AG04449 (cell line): ENCODE measurements at regions of chr5 and their contacts with region 1.

Region 1: GRCh38 chr5:78964887-78965286 is 20.2 kb downstream of the ARSB start:
- DNase-seq: no peak
- H3K4me3 ChIP-seq: no peak overlapping the region
- CTCF ChIP-seq: peak; percentile 46

Region 2: GRCh38 chr5:78467752-78468357 is 497.0 kb before region 1 on chr5:
- CTCF ChIA-PET with region 1: interaction called, 20 read pairs
- POLR2A ChIA-PET with region 1: no interaction called
- DNase-seq: no peak
- H3K4me3 ChIP-seq: no peak overlapping the region
- CTCF ChIP-seq: peak; percentile 43

Region 3: GRCh38 chr5:78886341-78887230 is 78.3 kb before region 1 on chr5:
- CTCF ChIA-PET with region 1: interaction called, 90 read pairs
- POLR2A ChIA-PET with region 1: no interaction called
- DNase-seq: no peak
- H3K4me3 ChIP-seq: no peak overlapping the region
- CTCF ChIP-seq: peak; percentile 27

Region 4: GRCh38 chr5:78908173-78909061 is 56.5 kb before region 1 on chr5:
- CTCF ChIA-PET with region 1: interaction called, 191 read pairs
- POLR2A ChIA-PET with region 1: no interaction called
- DNase-seq: no peak
- H3K4me3 ChIP-seq: peak overlapping the region; percentile 43
- CTCF ChIP-seq: no peak

Region 5: GRCh38 chr5:78984439-78985115 is 19.7 kb after region 1 on chr5:
- CTCF ChIA-PET with region 1: interaction called, 13 read pairs
- POLR2A ChIA-PET with region 1: no interaction called
- DNase-seq: no peak
- H3K4me3 ChIP-seq: peak overlapping the region; percentile 73
- CTCF ChIP-seq: peak; percentile 64